ENCODE measurements at regions of chr12 and their contacts with region 1.

Region 1: GRCh38 chr12:68610370-68611093 is at the start of gene RAP1B:
- DNase-seq: peak; percentile 92
- ATAC-seq: peak; percentile 84
- H3K4me3 Mint-ChIP-seq: peak within 1 kb of the TSS; percentile 97
- H3K27ac Mint-ChIP-seq: peak within 1 kb of the TSS; percentile 94
- H3K4me1 Mint-ChIP-seq: peaks cover 41% of the 10 kb centered on the region
- H3K27me3 Mint-ChIP-seq: no peaks in the 10 kb centered on the region
- total RNA-seq, gene RAP1B: 233 to 257 TPM

Region 2: GRCh38 chr12:68225576-68226476 is 384.7 kb before region 1 on chr12 and contains the start of gene IL26:
- POLR2A ChIA-PET with region 1: no interaction called
- DNase-seq: no peak
- ATAC-seq: no peak
- H3K4me3 Mint-ChIP-seq: no peak within 1 kb of the TSS
- H3K27ac Mint-ChIP-seq: no peak within 1 kb of the TSS
- H3K4me1 Mint-ChIP-seq: peaks cover 24% of the 10 kb centered on the region
- H3K27me3 Mint-ChIP-seq: peaks cover 2% of the 10 kb centered on the region
- total RNA-seq, gene IL26: not detected

Region 3: GRCh38 chr12:68374307-68374982 is 236.1 kb before region 1 on chr12:
- POLR2A ChIA-PET with region 1: interaction called, 12 read pairs
- DNase-seq: no peak
- ATAC-seq: peak; percentile 65
- H3K4me3 Mint-ChIP-seq: no peak overlapping the region
- H3K27ac Mint-ChIP-seq: no peak overlapping the region
- H3K4me1 Mint-ChIP-seq: peaks cover 23% of the 10 kb centered on the region
- H3K27me3 Mint-ChIP-seq: no peaks in the 10 kb centered on the region

Region 4: DNA sequence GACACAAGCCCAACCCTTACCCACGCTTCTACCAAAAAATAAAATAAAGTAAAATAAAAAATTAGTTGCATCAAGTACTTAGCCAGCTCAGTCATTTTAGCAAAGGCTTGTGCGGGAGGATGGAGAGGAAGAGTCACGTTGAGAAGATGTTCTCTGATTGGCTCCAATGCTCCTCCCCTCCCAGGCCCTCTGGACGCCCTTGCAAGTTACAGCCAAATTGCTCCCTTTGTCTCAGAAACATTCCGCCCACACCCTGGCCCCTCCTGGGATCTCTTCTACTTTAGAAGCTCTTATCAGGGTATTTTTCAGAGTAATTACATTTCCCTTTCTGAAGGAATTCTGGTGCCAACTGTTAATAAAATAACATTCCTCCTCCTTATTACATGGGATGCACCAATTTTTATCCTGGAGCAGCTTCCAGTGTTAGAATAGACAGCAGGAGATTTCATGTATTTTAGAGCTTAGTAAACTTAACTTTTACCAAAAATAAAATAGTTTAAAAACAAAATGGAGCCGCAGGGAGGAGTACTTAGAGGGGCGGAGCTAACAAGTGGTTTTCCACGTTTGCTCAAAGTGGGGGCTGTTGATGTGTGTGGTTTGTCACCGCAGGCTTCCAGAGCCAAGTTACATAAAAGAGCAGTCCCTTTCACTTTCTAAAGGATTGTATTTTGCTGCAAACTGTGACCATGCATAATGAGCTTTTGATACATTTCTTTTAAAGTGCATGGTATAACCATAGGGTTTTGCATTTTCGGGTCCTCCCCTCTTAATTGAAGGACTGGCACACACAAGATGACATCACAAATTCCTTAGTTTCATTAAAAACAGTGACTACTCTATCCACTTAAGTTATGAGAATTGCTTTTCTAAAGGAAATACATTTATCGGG is 71.6 kb before region 1 on chr12:
- POLR2A ChIA-PET with region 1: interaction called, 15 read pairs
- DNase-seq: peak; percentile 51
- ATAC-seq: peak; percentile 90
- H3K4me3 Mint-ChIP-seq: peak overlapping the region; percentile 82
- H3K27ac Mint-ChIP-seq: peak overlapping the region; percentile 91
- H3K4me1 Mint-ChIP-seq: peaks cover 52% of the 10 kb centered on the region
- H3K27me3 Mint-ChIP-seq: no peaks in the 10 kb centered on the region

Region 5: GRCh38 chr12:68587448-68587873 is 23.1 kb before region 1 on chr12:
- POLR2A ChIA-PET with region 1: interaction called, 25 read pairs
- DNase-seq: peak; percentile 50
- ATAC-seq: peak; percentile 85
- H3K4me3 Mint-ChIP-seq: peak overlapping the region; percentile 58
- H3K27ac Mint-ChIP-seq: peak overlapping the region; percentile 94
- H3K4me1 Mint-ChIP-seq: peaks cover 35% of the 10 kb centered on the region
- H3K27me3 Mint-ChIP-seq: no peaks in the 10 kb centered on the region